GM12878 (cell line): ENCODE measurements at regions of chr6 and their contacts with region 1.

Region 1: GRCh38 chr6:10694302-10695085 is at the starts of genes C6orf52 and PAK1IP1:
- DNase-seq: peak; percentile 88
- ATAC-seq: peak; percentile 97
- H3K4me3 ChIP-seq: peak within 1 kb of the TSS; percentile 73
- H3K27ac ChIP-seq: peak within 1 kb of the TSS; percentile 96
- H3K4me1 ChIP-seq: peaks cover 7% of the 10 kb centered on the region
- H3K27me3 ChIP-seq: no peaks in the 10 kb centered on the region
- CTCF ChIP-seq: no peak
- EP300 ChIP-seq: 0 out of 4 replicates have a peak, but pooled peaks of 1 of the 2 experiments have one; percentile 60
- POLR2A ChIP-seq: peak; percentile 93
- RAD21 ChIP-seq: no peak
- polyA plus RNA-seq, gene C6orf52: 13.1 to 15.1 TPM
- polyA plus RNA-seq, gene PAK1IP1: 86.1 to 98.5 TPM

Region 2: GRCh38 chr6:10528170-10528981 is 166.1 kb before region 1 on chr6:
- CTCF ChIA-PET with region 1: interaction called, 5 read pairs
- POLR2A ChIA-PET with region 1: interaction called, 7 read pairs
- RAD21 ChIA-PET with region 1: interaction called, 6 read pairs
- SMC1A ChIA-PET with region 1: interaction called, 3 read pairs
- in situ Hi-C with region 1: no loop called
- intact Hi-C with region 1: loop called (anchors 2 kb)
- DNase-seq: peak; percentile 72
- ATAC-seq: peak; percentile 66
- H3K4me3 ChIP-seq: peak overlapping the region; percentile 82
- H3K27ac ChIP-seq: peak overlapping the region; percentile 73
- H3K4me1 ChIP-seq: peaks cover 6% of the 10 kb centered on the region
- H3K27me3 ChIP-seq: no peaks in the 10 kb centered on the region
- CTCF ChIP-seq: 0 out of 6 replicates have a peak, but pooled peaks of 1 of the 3 experiments have one; percentile 8
- EP300 ChIP-seq: peak; percentile 7 to 24; a peak in 2 of 4 replicates
- POLR2A ChIP-seq: peak; percentile 65
- RAD21 ChIP-seq: peak; percentile 12; the same call in 1 of the 2 replicates

Region 3: DNA sequence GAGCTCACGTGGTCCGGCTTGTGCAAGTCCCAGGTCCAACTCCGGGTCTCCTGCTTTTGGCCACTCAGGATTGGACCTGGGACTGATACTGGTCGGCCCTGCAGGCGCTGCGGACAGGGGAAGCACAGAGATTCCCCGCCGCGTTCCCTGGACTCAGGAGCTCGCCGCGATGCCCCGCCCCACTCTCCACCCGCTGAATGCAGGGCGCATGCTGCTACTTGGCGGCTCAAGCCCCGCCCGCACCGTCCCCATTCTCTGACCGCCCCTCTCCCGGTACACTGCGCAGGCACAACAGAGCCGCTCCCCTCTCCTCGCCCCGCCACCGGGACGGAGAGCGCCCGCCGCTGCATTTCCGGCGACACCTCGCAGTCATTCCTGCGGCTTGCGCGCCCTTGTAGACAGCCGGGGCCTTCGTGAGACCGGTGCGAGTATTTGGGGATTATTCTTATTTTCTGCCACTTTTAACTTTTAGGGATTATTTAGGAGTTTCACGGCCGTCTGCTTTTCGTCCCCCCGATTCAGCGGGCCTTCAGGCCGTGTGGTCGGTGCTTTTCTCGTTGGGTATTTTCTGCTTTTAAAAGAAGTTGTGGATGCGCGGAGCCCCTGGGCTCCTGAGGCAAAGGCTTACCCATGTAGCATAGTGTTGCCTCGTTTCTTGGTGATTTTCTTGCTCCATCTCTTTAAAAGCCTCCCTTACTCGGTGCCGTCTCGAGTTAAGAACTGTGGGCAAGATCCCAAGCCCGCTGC is 28.5 kb after region 1 on chr6 and contains the start of gene TMEM14C:
- CTCF ChIA-PET with region 1: interaction called, 7 read pairs
- POLR2A ChIA-PET with region 1: interaction called, 40 read pairs
- RAD21 ChIA-PET with region 1: interaction called, 11 read pairs
- SMC1A ChIA-PET with region 1: interaction called, 10 read pairs
- in situ Hi-C with region 1: no loop called
- intact Hi-C with region 1: loop called (anchors 1 kb)
- DNase-seq: peak; percentile 71
- ATAC-seq: peak; percentile 99
- H3K4me3 ChIP-seq: peak within 1 kb of the TSS; percentile 97
- H3K27ac ChIP-seq: peak within 1 kb of the TSS; percentile 63
- H3K4me1 ChIP-seq: peaks cover 4% of the 10 kb centered on the region
- H3K27me3 ChIP-seq: no peaks in the 10 kb centered on the region
- CTCF ChIP-seq: no peak
- EP300 ChIP-seq: peak; percentile 7 to 36; a peak in 1 of 4 replicates
- POLR2A ChIP-seq: peak; percentile 85
- RAD21 ChIP-seq: no peak
- polyA plus RNA-seq, gene TMEM14C: 169 to 224 TPM

Region 4: DNA sequence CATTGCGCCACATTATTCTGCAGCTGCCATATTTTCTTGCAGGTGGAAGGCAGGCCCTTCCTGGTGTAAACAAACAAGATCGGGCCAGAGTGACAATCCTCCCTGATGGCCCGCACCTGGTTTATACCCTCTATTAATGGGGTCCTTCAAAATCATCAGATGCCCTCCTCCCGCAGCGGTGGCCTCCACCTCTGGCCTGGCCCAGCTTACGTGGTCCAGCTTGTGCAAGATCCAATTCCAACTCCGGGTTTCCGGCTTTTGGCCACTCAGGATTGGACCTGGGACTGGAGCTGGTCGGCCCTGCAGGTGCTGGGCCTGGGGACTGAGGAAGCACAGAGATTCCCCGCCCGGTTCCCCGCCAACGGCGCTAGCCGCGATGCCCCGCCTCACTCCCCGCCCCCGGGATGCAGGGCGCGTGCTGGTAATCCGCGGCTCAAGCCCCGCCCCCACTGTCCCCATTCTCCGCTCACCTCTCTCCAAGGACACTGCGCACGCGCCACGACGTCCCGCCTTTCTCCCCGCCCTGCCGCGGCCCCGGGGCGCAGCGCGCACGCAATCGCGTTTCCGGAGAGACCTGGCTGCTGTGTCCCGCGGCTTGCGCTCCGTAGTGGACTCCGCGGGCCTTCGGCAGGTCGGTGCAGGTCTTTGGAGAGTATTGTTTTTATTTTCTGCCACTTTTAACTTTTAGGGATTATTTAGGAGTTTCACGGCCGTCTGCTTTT is 52.9 kb after region 1 on chr6 and contains the start of gene TMEM14B:
- CTCF ChIA-PET with region 1: interaction called, 7 read pairs
- POLR2A ChIA-PET with region 1: interaction called, 21 read pairs
- RAD21 ChIA-PET with region 1: interaction called, 9 read pairs
- SMC1A ChIA-PET with region 1: interaction called, 4 read pairs
- in situ Hi-C with region 1: no loop called
- intact Hi-C with region 1: loop called (anchors 1 kb)
- DNase-seq: peak; percentile 90
- ATAC-seq: peak; percentile 98
- H3K4me3 ChIP-seq: peak within 1 kb of the TSS; percentile 87
- H3K27ac ChIP-seq: peak within 1 kb of the TSS; percentile 69
- H3K4me1 ChIP-seq: peaks cover 5% of the 10 kb centered on the region; the same call in 1 of the 2 replicates
- H3K27me3 ChIP-seq: no peaks in the 10 kb centered on the region
- CTCF ChIP-seq: no peak
- EP300 ChIP-seq: no peak
- POLR2A ChIP-seq: peak; percentile 94
- RAD21 ChIP-seq: no peak
- polyA plus RNA-seq, gene TMEM14B: 366 to 399 TPM

Region 5: DNA sequence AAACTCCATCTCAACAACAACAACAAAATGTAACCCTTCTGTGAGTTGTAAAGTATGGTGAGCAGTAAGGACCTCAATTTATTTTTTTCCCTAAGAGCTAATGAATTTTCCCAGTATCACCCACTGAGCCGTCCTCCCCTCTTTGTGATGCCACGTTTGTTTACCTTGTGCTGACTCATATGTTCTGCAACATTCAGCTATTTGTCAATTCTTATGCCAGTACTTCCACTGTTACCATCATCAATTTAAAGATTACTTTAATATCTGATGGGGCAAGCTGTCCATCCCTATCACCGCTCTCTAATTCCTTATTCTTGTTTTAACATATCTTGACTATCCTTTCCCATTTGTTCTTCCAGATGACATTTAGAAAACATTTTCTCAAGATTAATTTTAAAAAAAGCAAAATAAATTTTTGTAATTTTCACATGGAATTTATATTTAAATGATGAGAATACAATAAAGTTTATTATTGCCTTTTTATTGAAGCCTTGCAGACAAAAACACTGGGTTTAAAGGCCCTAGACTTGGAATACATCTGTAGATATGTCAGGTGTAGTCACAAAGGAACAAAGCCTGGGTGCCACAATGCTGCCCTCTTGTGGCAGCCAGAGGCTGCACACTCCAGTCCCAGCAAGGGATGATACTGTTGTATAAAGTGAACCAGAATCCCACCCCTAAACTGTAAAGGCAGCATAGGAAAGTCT is 106.5 kb after region 1 on chr6:
- CTCF ChIA-PET with region 1: interaction called, 3 read pairs
- POLR2A ChIA-PET with region 1: no interaction called
- RAD21 ChIA-PET with region 1: no interaction called
- SMC1A ChIA-PET with region 1: interaction called, 3 read pairs
- in situ Hi-C with region 1: no loop called
- intact Hi-C with region 1: loop called (anchors 1 kb)
- DNase-seq: no peak
- ATAC-seq: peak; percentile 100
- H3K4me3 ChIP-seq: no peak overlapping the region
- H3K27ac ChIP-seq: no peak overlapping the region
- H3K4me1 ChIP-seq: no peaks in the 10 kb centered on the region
- H3K27me3 ChIP-seq: no peaks in the 10 kb centered on the region
- CTCF ChIP-seq: peak; percentile 98 to 99 (median 99); a peak in 5 of 6 replicates
- EP300 ChIP-seq: no peak
- POLR2A ChIP-seq: no peak
- RAD21 ChIP-seq: peak; percentile 94